MCF 10A (cell line): ENCODE measurements at regions of chr10 and their contacts with region 1.

Region 1: GRCh38 chr10:94315024-94315451 is 47.7 kb downstream of the NOC3L start:
- DNase-seq: no peak
- H3K4me3 Mint-ChIP-seq: no peak overlapping the region
- H3K27ac Mint-ChIP-seq: no peak overlapping the region
- H3K4me1 Mint-ChIP-seq: no peaks in the 10 kb centered on the region
- H3K27me3 Mint-ChIP-seq: no peaks in the 10 kb centered on the region
- CTCF ChIP-seq: no peak

Region 2: DNA sequence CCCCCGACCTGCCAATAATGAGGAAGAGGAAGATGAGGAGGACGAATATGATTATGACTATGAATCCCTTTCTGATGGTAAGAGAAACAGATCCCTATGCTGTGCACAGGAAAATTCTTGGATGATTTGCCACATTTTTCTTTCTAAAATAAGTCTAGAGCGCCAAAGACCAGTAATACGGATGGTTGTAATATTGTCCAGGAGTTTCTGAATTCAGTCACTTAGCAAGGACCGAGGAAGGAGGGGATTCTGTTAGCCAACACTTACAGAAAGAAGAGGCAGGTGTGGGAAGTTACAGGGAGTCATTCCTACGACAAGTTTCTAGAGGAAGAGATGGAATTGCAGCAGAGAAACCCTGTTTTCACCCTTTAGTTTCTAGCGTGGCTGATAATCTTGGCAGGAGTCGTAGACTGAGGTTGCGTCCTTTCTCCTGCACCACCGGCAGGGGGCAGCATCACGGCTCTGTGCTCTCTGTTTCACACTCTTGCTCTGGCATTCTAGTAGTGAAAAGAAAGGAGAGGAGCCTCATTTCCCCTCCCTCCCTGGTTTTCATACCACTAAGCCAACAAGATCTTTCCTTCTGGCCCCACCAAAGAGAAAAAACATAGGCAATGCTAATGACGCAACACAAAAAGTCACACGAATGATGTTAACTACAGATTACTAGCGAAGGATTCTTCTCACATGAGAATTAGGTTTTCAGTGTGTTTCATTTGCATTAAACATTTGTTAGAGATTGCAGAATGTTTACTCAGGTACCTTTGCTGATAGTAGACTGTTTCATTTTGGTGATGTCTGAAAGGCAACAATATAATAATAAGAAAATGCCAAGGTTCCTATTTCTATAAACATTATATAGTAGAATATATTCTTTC is 35.0 kb before region 1 on chr10:
- CTCF ChIA-PET with region 1: interaction called, 9 read pairs
- POLR2A ChIA-PET with region 1: no interaction called
- intact Hi-C with region 1: loop called (anchors 5 kb)
- DNase-seq: peak; percentile 59
- H3K4me3 Mint-ChIP-seq: no peak overlapping the region
- H3K27ac Mint-ChIP-seq: peak overlapping the region; percentile 43
- H3K4me1 Mint-ChIP-seq: peaks cover 5% of the 10 kb centered on the region
- H3K27me3 Mint-ChIP-seq: no peaks in the 10 kb centered on the region
- CTCF ChIP-seq: peak; percentile 73

Region 3: DNA sequence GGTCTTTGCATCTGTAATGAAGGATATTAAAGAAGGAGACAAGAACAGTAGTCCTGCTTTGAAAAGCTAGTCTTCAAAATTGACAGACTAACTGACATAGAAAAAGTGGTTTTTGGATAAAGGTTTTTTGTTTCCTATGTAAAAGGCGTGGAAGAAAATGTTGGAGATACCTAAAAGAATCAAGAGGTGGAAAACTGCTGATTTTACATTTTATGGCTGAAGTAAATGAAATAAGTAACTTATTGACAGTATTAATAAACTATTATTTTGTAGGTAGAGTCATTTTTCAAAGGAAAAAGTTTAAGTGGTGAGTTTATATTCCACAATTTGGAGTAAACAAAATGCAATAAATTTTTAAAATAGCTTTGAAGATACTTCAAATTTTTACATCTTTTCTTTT is 218.0 kb after region 1 on chr10:
- CTCF ChIA-PET with region 1: no interaction called
- POLR2A ChIA-PET with region 1: no interaction called
- intact Hi-C with region 1: no loop called
- DNase-seq: no peak
- H3K4me3 Mint-ChIP-seq: no peak overlapping the region
- H3K27ac Mint-ChIP-seq: no peak overlapping the region
- H3K4me1 Mint-ChIP-seq: no peaks in the 10 kb centered on the region
- H3K27me3 Mint-ChIP-seq: no peaks in the 10 kb centered on the region
- CTCF ChIP-seq: no peak

Region 4: GRCh38 chr10:94785211-94785610 is 470.2 kb after region 1 on chr10:
- CTCF ChIA-PET with region 1: no interaction called
- POLR2A ChIA-PET with region 1: no interaction called
- intact Hi-C with region 1: no loop called
- DNase-seq: no peak
- H3K4me3 Mint-ChIP-seq: no peak overlapping the region
- H3K27ac Mint-ChIP-seq: no peak overlapping the region
- H3K4me1 Mint-ChIP-seq: peaks cover 6% of the 10 kb centered on the region
- H3K27me3 Mint-ChIP-seq: no peaks in the 10 kb centered on the region
- CTCF ChIP-seq: no peak